Activated CD4-positive, alpha-beta memory T cell treated with anti-CD3 and anti-CD28 coated beads, Interleukin-2, amount 10 ng/mL, durations not matched to agents 7 days and 5 days (primary cell): ENCODE measurements at regions of chr9 and their contacts with region 1.

Region 1: DNA sequence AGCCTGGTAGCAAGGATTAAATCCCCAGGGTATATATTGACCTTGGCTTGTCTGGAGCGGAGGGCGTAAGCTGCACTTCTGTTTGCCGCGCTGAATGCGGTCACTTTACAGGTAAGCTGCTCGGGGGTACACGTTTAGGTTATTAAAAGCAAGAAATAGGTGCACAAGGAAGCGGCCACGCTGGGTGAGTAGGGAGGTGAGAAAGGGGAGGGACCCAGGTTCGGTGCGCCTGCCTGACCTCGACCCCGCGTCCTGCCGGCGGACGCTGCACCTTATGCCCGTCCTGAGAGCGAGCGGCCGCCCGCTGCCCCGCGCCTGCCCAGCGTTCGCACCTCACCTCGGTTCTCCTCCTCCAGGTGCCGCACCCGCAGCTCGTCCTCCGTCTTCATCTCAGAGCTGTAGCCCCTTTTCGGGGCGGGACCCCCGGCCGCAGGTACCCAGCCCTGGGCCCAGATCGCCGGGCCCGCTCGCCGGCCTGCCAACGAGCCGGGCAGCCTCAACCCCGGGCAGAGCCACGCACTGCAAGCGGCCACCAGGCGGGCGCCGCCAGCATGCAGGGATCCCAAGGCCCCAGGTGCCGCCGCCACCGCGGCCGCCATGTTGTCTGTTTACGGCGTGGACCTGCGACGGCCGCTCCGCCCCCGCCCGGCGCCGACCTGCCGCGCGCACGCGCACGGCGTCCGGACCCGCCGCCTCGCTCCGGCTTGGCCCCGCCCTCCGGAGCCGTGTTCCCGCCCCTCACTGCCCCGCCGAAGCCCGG is at the start of gene AUH:
- DNase-seq: peak; percentile 88
- H3K4me3 Mint-ChIP-seq: peak within 1 kb of the TSS; percentile 99
- H3K27ac Mint-ChIP-seq: peak within 1 kb of the TSS; percentile 94
- H3K4me1 Mint-ChIP-seq: peaks cover 55% of the 10 kb centered on the region
- H3K27me3 Mint-ChIP-seq: no peaks in the 10 kb centered on the region
- total RNA-seq, gene AUH: 34.8 to 39.3 TPM

Region 2: GRCh38 chr9:90914868-90915483 is 446.5 kb before region 1 on chr9:
- CTCF ChIA-PET with region 1: interaction called, 10 read pairs
- POLR2A ChIA-PET with region 1: no interaction called
- DNase-seq: peak; percentile 80
- H3K4me3 Mint-ChIP-seq: no peak overlapping the region
- H3K27ac Mint-ChIP-seq: no peak overlapping the region
- H3K4me1 Mint-ChIP-seq: peaks cover 7% of the 10 kb centered on the region
- H3K27me3 Mint-ChIP-seq: no peaks in the 10 kb centered on the region

Region 3: GRCh38 chr9:91193658-91194391 is 167.6 kb before region 1 on chr9:
- CTCF ChIA-PET with region 1: interaction called, 4 read pairs
- POLR2A ChIA-PET with region 1: interaction called, 25 read pairs
- DNase-seq: peak; percentile 92
- H3K4me3 Mint-ChIP-seq: peak overlapping the region; percentile 77
- H3K27ac Mint-ChIP-seq: peak overlapping the region; percentile 98
- H3K4me1 Mint-ChIP-seq: peaks cover 75% of the 10 kb centered on the region
- H3K27me3 Mint-ChIP-seq: no peaks in the 10 kb centered on the region

Region 4: DNA sequence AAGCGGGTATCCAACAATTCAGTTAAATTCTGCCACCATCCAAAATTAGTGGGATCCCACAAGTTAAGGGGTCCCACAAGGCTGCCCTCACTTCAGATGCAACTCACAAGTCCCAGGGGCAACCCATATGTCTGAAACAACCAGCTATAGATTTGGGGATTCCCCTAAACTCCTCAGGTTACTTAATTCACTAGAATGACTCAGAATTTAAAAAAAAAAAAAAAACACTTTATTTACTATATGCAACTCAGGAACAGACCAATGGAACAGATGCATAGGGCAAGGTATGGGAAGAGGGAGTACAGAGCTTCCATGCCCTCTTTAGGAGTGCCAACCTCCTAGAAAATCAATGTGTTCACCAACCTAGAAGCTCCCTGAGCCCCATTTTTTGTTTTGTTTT is 14.8 kb before region 1 on chr9:
- CTCF ChIA-PET with region 1: interaction called, 7 read pairs
- POLR2A ChIA-PET with region 1: interaction called, 136 read pairs
- DNase-seq: no peak
- H3K4me3 Mint-ChIP-seq: no peak overlapping the region
- H3K27ac Mint-ChIP-seq: no peak overlapping the region
- H3K4me1 Mint-ChIP-seq: peaks cover 68% of the 10 kb centered on the region
- H3K27me3 Mint-ChIP-seq: no peaks in the 10 kb centered on the region

Region 5: DNA sequence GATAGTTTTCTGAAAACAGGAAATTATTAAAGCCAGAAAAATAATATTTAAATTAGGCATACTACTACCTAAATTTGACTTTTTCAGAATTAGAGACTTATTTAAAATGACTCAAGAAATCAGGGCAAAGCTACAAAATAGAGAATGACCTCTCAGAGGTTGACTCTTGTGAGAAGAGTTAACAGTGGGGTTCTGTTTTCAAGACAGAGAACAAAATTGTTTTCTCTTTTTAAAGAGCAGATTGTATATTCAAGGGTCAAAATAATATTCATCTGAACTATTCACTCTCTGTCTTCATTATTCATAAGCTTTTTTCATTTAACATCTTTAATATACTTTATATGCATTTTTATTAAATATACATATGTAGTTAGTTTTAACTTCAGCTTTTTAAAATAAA is 22.1 kb after region 1 on chr9:
- CTCF ChIA-PET with region 1: no interaction called
- POLR2A ChIA-PET with region 1: no interaction called
- DNase-seq: no peak
- H3K4me3 Mint-ChIP-seq: no peak overlapping the region
- H3K27ac Mint-ChIP-seq: no peak overlapping the region
- H3K4me1 Mint-ChIP-seq: no peaks in the 10 kb centered on the region
- H3K27me3 Mint-ChIP-seq: peaks cover 22% of the 10 kb centered on the region

Region 6: DNA sequence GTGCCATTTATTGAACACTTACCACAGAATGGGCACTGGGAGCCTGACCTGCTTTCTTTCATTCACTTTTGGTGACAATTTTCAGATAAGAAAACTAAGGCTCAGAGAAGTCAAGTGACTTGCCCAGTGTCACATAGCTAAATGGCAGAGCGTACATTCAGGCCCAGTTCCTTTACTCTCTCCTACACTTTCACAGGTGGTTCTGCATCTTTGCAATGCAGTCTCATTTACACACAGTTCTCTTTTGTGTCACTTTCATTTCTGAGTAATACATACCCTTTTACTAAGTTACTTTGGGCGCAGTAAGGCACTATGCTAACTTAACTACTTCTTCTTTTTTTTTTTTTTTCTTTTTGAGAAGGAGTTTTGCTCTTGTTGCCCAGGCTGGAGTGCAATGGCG is 53.8 kb after region 1 on chr9:
- CTCF ChIA-PET with region 1: interaction called, 18 read pairs
- POLR2A ChIA-PET with region 1: interaction called, 296 read pairs
- DNase-seq: no peak
- H3K4me3 Mint-ChIP-seq: peak overlapping the region; percentile 22
- H3K27ac Mint-ChIP-seq: peak overlapping the region; percentile 4
- H3K4me1 Mint-ChIP-seq: peaks cover 87% of the 10 kb centered on the region
- H3K27me3 Mint-ChIP-seq: no peaks in the 10 kb centered on the region